GM13977 (cell line): ENCODE measurements at regions of chr4 and their contacts with region 1.

Region 1: DNA sequence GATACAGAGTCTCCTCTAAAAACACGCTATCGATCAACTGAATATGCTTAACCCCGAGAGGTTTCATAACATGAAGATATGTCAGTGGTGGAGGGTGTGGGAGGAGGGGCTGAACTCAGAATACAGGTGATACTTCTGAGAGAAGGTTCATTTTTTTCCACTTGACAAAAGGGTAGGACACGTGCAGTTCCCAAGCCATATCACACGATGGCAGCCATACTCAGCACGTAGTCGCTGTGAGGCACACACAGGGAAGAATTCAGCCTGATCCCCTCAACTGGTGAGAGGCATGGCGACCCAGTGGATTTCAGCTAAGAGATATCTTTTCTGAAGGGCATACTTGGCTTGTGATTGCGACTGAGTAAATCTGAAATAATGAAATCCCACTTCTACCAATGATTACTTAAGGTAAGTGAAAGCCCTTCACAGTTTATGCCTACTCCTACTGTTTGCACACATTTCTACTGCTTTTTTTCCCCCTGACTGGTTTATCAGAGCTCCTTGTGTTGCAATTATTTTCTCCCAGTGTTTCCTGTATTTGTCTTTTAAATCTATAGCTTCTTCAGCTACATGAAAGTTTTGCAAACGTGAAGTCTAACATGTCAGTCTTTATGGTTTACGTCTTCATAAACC is 133.1 kb downstream of the CORIN start:
- DNase-seq: peak; percentile 25
- CTCF ChIP-seq: peak; percentile 59

Region 2: GRCh38 chr4:47836641-47837093 is 131.9 kb after region 1 on chr4:
- in situ Hi-C with region 1: loop called (anchors 25 kb)
- DNase-seq: peak; percentile 69
- CTCF ChIP-seq: peak; percentile 81